K562 (cell line): ENCODE measurements at regions of chr12 and their contacts with region 1.

Region 1: GRCh38 chr12:42568952-42569915 is 20.3 kb downstream of the PRICKLE1 start:
- DNase-seq: peak in 2 of 4 experiments; percentile 19 to 61
- ATAC-seq: peak; percentile 82
- H3K4me3 ChIP-seq: no peak overlapping the region
- H3K27ac ChIP-seq: no peak overlapping the region
- H3K4me1 ChIP-seq: no peaks in the 10 kb centered on the region
- H3K27me3 ChIP-seq: peaks cover 0 to 4% of the 10 kb centered on the region in 2 experiments; a peak in 2 of 5 replicates
- CTCF ChIP-seq: peak; percentile 44 to 79 (median 56); a peak in 5 of 6 replicates
- EP300 ChIP-seq: no peak
- POLR2A ChIP-seq: no peak
- RAD21 ChIP-seq: peak; percentile 61 to 90

Region 2: DNA sequence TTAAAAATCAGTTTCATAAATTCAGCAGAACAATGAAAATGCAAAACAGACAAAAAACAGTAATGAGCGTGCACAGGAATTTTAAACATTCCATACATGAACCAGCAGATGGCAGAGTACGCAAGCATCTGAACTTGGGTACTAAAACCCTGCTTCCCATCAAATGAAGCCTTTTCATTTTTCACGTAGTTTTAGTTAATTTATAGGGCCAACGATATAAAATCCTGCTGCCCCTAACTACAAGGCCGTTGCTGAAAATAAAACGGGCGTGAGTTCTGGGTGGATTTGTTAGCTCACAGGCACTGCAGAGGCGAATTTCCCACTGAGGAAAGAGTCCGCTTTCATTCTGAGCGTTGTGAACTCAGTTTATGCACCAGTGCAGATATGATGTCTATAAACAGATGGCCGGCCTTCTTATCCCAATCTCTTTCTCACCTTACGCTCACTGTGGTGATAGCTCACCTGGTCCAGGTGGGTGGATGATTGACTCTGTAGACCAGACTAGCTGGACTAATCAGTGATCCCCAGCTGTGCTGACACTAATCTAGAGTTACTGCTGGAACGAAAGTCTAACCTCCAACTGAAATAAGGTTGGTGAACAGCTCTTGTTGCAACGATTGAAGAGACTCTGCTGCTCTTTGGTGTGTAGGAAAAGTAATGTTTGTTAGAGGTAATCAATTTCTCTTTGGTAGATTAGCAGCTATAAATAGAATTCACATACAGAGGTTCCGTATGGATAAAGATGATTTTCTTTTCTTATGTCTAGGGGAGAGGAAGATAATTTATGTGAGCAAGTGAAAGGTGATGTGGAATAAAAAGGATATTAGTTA is 1291.9 kb before region 1 on chr12:
- CTCF ChIA-PET with region 1: no interaction called
- POLR2A ChIA-PET with region 1: no interaction called
- in situ Hi-C with region 1: no loop called
- intact Hi-C with region 1: loop called (anchors 5 kb)
- DNase-seq: peak; percentile 13 to 29 (median 22)
- ATAC-seq: no peak
- H3K4me3 ChIP-seq: no peak overlapping the region
- H3K27ac ChIP-seq: no peak overlapping the region
- H3K4me1 ChIP-seq: no peaks in the 10 kb centered on the region
- H3K27me3 ChIP-seq: no peaks in the 10 kb centered on the region
- CTCF ChIP-seq: peak in 2 of 3 experiments; percentile 43 to 57; a peak in 3 of 6 replicates
- EP300 ChIP-seq: no peak
- POLR2A ChIP-seq: no peak
- RAD21 ChIP-seq: peak; percentile 60 to 75

Region 3: GRCh38 chr12:42059127-42059526 is 510.1 kb before region 1 on chr12:
- CTCF ChIA-PET with region 1: no interaction called
- POLR2A ChIA-PET with region 1: no interaction called
- in situ Hi-C with region 1: no loop called
- intact Hi-C with region 1: no loop called
- DNase-seq: no peak
- ATAC-seq: no peak
- H3K4me3 ChIP-seq: no peak overlapping the region
- H3K27ac ChIP-seq: no peak overlapping the region
- H3K4me1 ChIP-seq: no peaks in the 10 kb centered on the region
- H3K27me3 ChIP-seq: no peaks in the 10 kb centered on the region; a peak in 1 of 5 replicates
- CTCF ChIP-seq: no peak
- EP300 ChIP-seq: no peak
- POLR2A ChIP-seq: no peak
- RAD21 ChIP-seq: no peak

Region 4: GRCh38 chr12:42144408-42145196 is 424.6 kb before region 1 on chr12 and contains the start of gene GXYLT1:
- CTCF ChIA-PET with region 1: no interaction called
- POLR2A ChIA-PET with region 1: no interaction called
- in situ Hi-C with region 1: loop called (anchors 25 kb)
- intact Hi-C with region 1: no loop called
- DNase-seq: peak; percentile 92 to 95 (median 94)
- ATAC-seq: peak; percentile 96
- H3K4me3 ChIP-seq: peak within 1 kb of the TSS; percentile 67
- H3K27ac ChIP-seq: peak within 1 kb of the TSS; percentile 74
- H3K4me1 ChIP-seq: peaks cover 13 to 23% of the 10 kb centered on the region in 2 experiments; a peak in 4 of 5 replicates
- H3K27me3 ChIP-seq: no peaks in the 10 kb centered on the region
- CTCF ChIP-seq: 0 out of 6 replicates have a peak, but pooled peaks of 1 of the 3 experiments have one; percentile 1
- EP300 ChIP-seq: no peak
- POLR2A ChIP-seq: peak; percentile 91
- RAD21 ChIP-seq: no peak
- polyA plus RNA-seq, gene GXYLT1: 1.4 to 1.7 TPM

Region 5: DNA sequence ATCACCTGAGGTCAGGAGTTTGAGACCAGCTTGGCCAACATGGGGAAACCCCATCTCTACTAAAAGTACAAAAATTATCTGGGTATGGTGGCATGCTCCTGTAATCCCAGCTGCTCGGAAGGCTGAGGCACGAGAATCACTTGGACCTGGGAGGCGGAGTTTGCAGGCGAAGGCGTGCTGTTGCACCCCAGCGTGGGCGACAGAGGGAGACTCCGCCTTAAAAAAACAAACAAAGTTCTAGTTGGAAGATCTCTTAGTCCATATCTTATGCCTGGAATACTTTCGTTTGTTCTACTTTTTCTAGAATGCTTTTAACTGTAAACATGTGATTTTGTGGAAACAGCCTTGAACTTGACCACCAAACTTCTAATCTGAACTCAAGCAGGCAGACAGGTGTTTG is 204.5 kb before region 1 on chr12:
- CTCF ChIA-PET with region 1: no interaction called
- POLR2A ChIA-PET with region 1: no interaction called
- in situ Hi-C with region 1: loop called (anchors 10 kb)
- intact Hi-C with region 1: loop called (anchors 2 kb)
- DNase-seq: peak in 2 of 4 experiments; percentile 49 to 71
- ATAC-seq: peak; percentile 95
- H3K4me3 ChIP-seq: no peak overlapping the region
- H3K27ac ChIP-seq: no peak overlapping the region
- H3K4me1 ChIP-seq: peaks cover 7 to 11% of the 10 kb centered on the region in 2 experiments; a peak in 3 of 5 replicates
- H3K27me3 ChIP-seq: no peaks in the 10 kb centered on the region
- CTCF ChIP-seq: peak; percentile 34 to 60 (median 52)
- EP300 ChIP-seq: no peak
- POLR2A ChIP-seq: no peak
- RAD21 ChIP-seq: peak; percentile 50 to 51

Region 6: GRCh38 chr12:42482445-42483237 is 86.6 kb before region 1 on chr12:
- CTCF ChIA-PET with region 1: interaction called, 19 read pairs
- POLR2A ChIA-PET with region 1: interaction called, 3 read pairs
- in situ Hi-C with region 1: no loop called
- intact Hi-C with region 1: loop called (anchors 1 kb)
- DNase-seq: peak; percentile 80 to 87 (median 82)
- ATAC-seq: peak; percentile 95
- H3K4me3 ChIP-seq: peak overlapping the region; percentile 57
- H3K27ac ChIP-seq: no peak overlapping the region
- H3K4me1 ChIP-seq: peaks cover 9 to 18% of the 10 kb centered on the region in 2 experiments; a peak in 4 of 5 replicates
- H3K27me3 ChIP-seq: no peaks in the 10 kb centered on the region
- CTCF ChIP-seq: peak; percentile 85 to 98 (median 96)
- EP300 ChIP-seq: no peak
- POLR2A ChIP-seq: no peak
- RAD21 ChIP-seq: peak; percentile 75 to 84